Aorta (tissue), 5 donors: ENCODE measurements at regions of chr3 and their contacts with region 1.

Region 1: DNA sequence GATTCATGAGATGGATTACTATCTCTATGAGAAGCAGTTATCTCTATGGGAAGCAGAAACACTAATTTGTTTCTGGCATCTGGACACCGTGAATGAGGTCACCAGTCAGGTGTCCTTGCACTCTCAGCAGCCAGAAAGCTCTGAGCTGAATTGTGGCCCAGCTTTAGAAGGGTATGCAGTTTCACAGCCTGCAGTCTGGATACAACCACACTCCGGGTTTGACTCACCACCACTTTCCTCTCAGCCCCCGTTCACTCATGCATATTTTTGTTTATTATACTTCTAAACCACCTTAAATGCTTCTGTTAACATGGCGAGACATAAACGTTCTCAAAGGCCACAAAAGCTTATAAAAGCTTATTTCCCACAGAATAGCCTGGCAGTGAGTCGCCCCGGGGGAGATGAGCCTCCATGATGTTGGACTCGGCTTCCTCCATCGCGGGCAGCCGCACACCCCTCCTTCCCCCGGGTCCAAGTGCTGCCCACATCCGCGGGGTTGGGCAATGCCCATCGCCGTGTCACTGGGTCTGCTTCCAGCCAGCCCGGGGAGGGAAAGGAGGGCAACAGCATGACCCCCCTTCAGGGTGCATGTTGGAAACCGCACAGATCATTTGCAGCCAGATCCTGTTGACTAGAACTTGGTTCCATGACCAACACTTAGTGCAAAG is 16.8 kb upstream of the SLC41A3 start:
- DNase-seq: peak in 1 of 2 donors; percentile 77
- ATAC-seq: peak; percentile 39
- H3K4me3 ChIP-seq: no peak overlapping the region
- H3K27ac ChIP-seq: peak overlapping the region; percentile 90 to 91
- H3K4me1 ChIP-seq: peaks cover 2 to 7% of the 10 kb centered on the region in 2 donors
- H3K27me3 ChIP-seq: no peaks in the 10 kb centered on the region

Region 2: DNA sequence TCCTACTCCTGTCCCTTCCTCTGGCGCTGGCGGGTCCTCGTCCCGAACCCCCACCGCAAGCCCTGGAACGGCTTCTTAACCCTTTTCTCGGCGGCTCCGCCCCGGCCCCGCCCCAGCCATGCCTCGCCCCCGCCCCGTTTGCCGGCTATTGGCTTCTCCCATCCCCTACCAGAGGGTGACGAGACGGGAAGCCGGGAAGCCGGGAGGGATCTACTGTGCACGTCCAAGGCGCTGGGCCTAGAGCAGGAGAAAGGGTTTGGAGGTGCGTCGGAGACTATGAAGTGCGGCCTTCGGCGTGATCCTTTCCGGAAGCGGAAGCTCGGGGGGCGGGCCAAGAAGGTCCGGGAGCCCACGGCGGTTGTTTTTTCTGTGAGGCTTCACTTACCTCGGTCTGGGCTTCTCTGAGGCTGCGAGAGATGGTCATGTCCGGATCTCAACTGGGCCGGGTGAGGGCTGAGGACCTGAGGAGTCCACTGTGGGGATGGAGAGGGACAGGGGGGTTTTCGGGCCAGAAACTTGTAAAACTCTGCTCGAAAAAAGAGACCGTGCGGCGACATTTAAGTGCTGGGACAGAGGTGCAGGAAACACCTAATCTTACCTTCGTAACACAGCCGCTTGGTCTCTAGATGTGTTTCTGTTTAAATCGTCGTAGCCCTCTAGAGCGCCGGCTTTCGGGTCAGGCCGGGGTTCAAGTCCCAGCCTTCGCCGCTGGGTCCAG is 110.4 kb before region 1 on chr3:
- intact Hi-C with region 1: loop called in 1 of 2 experiments (anchors 5 kb)
- DNase-seq: peak; percentile 94 to 95
- ATAC-seq: peak; percentile 93
- H3K4me3 ChIP-seq: peak overlapping the region; percentile 1 to 92
- H3K27ac ChIP-seq: peak overlapping the region in 1 of 2 donors; percentile 89
- H3K4me1 ChIP-seq: no peaks in the 10 kb centered on the region
- H3K27me3 ChIP-seq: no peaks in the 10 kb centered on the region

Region 3: GRCh38 chr3:126026277-126026751 is 74.5 kb before region 1 on chr3:
- intact Hi-C with region 1: no loop called
- DNase-seq: no peak
- ATAC-seq: no peak
- H3K4me3 ChIP-seq: no peak overlapping the region
- H3K27ac ChIP-seq: no peak overlapping the region
- H3K4me1 ChIP-seq: no peaks in the 10 kb centered on the region
- H3K27me3 ChIP-seq: no peaks in the 10 kb centered on the region

Region 4: DNA sequence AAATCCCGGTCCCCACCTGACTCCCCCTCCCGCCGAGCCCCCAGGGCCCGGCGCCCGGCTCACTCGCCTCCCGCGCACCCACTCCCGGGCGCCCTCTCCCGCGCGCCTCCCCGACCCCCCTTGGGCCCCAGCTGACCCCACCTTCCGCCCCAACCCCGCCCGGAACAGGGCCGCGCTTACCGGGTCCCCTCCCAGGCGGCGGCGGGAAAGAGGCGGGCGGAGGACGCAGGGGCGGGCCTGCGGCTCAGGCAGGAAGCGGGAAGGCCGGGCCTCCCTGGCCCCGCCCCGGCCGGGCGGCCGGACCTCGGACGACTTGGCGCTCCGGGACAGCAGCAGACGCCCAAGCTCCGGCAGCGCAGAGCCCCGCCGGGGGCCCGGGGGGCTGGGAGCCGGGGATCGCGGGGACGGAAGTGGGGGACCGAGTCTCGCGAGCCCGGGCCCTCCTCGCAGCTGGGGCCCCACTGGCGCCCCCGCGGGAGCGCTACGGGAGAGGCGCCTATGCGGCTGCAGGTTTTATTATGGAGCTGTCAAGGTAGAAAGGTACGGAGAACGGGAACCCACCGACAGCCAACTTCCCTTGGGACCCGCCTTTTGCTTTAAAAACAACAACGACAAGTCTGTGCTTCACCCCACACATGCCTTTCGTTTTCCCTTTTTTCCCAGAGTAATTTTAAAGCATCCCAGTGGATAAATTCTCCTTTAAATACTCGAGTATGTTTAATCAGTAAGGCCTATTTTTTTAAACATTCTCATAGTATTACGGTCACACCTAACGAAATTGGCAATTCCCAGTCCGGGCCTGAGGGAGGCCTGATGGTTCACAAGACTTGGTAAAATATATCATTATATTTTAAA is 16.6 kb before region 1 on chr3 and contains the start of gene SLC41A3:
- intact Hi-C with region 1: loop called in 1 of 2 experiments (anchors 1 kb)
- DNase-seq: peak; percentile 94 to 97
- ATAC-seq: peak; percentile 96
- H3K4me3 ChIP-seq: peak within 1 kb of the TSS; percentile 71 to 99
- H3K27ac ChIP-seq: peak within 1 kb of the TSS; percentile 59 to 98
- H3K4me1 ChIP-seq: no peaks in the 10 kb centered on the region
- H3K27me3 ChIP-seq: no peaks in the 10 kb centered on the region
- total RNA-seq, gene SLC41A3: 62.1 to 71.4 TPM